ENCODE measurements at regions of chr7 and their contacts with region 1.

Region 1: GRCh38 chr7:3027005-3027845 is 16.4 kb downstream of the CARD11 start:
- DNase-seq: no peak
- H3K4me3 ChIP-seq: no peak overlapping the region
- H3K27ac ChIP-seq: no peak overlapping the region
- H3K4me1 ChIP-seq: no peaks in the 10 kb centered on the region
- H3K27me3 ChIP-seq: peaks cover 16% of the 10 kb centered on the region
- CTCF ChIP-seq: no peak

Region 2: DNA sequence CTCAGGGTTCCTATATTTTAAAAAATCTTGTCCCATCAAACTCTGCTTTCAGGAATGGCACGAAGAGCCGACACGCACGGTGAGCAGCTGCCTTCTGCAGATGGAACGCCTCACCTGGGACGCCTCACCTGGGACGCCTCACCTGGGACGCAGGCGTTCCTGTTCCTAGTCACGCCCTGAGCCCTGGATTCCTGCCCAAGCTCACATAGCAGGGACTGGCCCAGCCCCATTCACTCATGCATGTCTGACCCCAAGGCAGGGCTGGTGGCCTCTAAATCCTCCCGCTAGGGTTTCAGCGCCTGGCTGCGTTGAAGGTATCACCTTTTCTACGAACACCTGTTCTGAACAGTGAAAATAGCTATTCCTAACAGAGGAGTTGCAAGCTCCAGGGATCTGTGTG is 33.4 kb before region 1 on chr7:
- CTCF ChIA-PET with region 1: no interaction called
- POLR2A ChIA-PET with region 1: no interaction called
- intact Hi-C with region 1: loop called (anchors 2 kb)
- DNase-seq: no peak
- H3K4me3 ChIP-seq: no peak overlapping the region
- H3K27ac ChIP-seq: no peak overlapping the region
- H3K4me1 ChIP-seq: no peaks in the 10 kb centered on the region
- H3K27me3 ChIP-seq: no peaks in the 10 kb centered on the region
- CTCF ChIP-seq: no peak

Region 3: DNA sequence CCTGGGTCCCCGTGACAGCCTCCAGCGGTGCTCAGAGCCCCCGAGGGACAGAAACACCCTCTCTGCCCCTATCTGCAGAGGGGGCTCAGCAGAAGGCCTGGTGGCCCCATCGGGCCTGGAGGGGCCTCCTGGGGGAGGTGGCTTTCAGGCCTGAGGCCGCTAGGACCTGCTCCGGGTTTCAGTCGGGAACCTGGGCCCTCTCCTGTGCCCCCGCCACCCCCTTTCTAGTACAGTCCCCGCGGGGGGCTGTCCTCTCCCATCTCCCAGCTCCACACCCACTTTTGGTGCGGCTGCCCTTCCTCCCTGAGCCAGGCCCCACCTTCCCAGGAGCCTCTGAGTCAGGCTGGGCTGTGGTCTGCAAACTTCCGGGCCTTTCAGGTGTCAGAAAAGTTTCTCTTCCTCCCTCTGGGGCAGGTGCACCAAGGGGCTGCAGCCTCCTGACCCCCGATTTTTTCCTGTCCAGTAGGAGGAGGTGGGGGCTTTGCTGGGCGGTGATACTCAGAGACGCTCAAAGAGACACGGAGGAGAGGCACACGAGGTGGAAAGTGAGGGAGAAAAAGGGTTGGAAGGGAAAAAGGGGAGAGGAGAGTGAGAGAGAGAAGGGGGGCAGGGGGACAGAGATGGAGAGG is 15.8 kb after region 1 on chr7:
- CTCF ChIA-PET with region 1: no interaction called
- POLR2A ChIA-PET with region 1: no interaction called
- intact Hi-C with region 1: no loop called
- DNase-seq: no peak
- H3K4me3 ChIP-seq: peak overlapping the region; percentile 19
- H3K27ac ChIP-seq: no peak overlapping the region
- H3K4me1 ChIP-seq: no peaks in the 10 kb centered on the region
- H3K27me3 ChIP-seq: no peaks in the 10 kb centered on the region
- CTCF ChIP-seq: no peak

Region 4: GRCh38 chr7:3179456-3179855 is 152.2 kb after region 1 on chr7:
- CTCF ChIA-PET with region 1: no interaction called
- POLR2A ChIA-PET with region 1: interaction called, 10 read pairs
- intact Hi-C with region 1: no loop called
- DNase-seq: no peak
- H3K4me3 ChIP-seq: no peak overlapping the region
- H3K27ac ChIP-seq: no peak overlapping the region
- H3K4me1 ChIP-seq: no peaks in the 10 kb centered on the region
- H3K27me3 ChIP-seq: peaks cover 3% of the 10 kb centered on the region
- CTCF ChIP-seq: no peak

Region 5: GRCh38 chr7:3191548-3191947 is 164.3 kb after region 1 on chr7:
- CTCF ChIA-PET with region 1: no interaction called
- POLR2A ChIA-PET with region 1: no interaction called
- intact Hi-C with region 1: no loop called
- DNase-seq: no peak
- H3K4me3 ChIP-seq: no peak overlapping the region
- H3K27ac ChIP-seq: no peak overlapping the region
- H3K4me1 ChIP-seq: no peaks in the 10 kb centered on the region
- H3K27me3 ChIP-seq: no peaks in the 10 kb centered on the region
- CTCF ChIP-seq: no peak